Activated CD8-positive, alpha-beta T cell treated with anti-CD3 and anti-CD28 coated beads for 36 hours (primary cell): ENCODE measurements at regions of chr17 and their contacts with region 1.

Region 1: GRCh38 chr17:63993368-63993985 is 4.7 kb upstream of the PRR29 start:
- DNase-seq: no peak
- ATAC-seq: no peak
- H3K4me3 Mint-ChIP-seq: no peak overlapping the region
- H3K27ac Mint-ChIP-seq: peak overlapping the region; percentile 37
- H3K4me1 Mint-ChIP-seq: peaks cover 38% of the 10 kb centered on the region
- H3K27me3 Mint-ChIP-seq: no peaks in the 10 kb centered on the region
- CTCF ChIP-seq: no peak

Region 2: GRCh38 chr17:63842540-63843386 is 150.7 kb before region 1 on chr17 and contains the start of gene SMARCD2:
- CTCF ChIA-PET with region 1: no interaction called
- POLR2A ChIA-PET with region 1: no interaction called
- intact Hi-C with region 1: no loop called
- DNase-seq: peak; percentile 99
- ATAC-seq: peak; percentile 92
- H3K4me3 Mint-ChIP-seq: peak within 1 kb of the TSS; percentile 98
- H3K27ac Mint-ChIP-seq: peak within 1 kb of the TSS; percentile 95
- H3K4me1 Mint-ChIP-seq: peaks cover 23% of the 10 kb centered on the region
- H3K27me3 Mint-ChIP-seq: no peaks in the 10 kb centered on the region
- CTCF ChIP-seq: no peak
- total RNA-seq, gene SMARCD2: 99.4 to 103 TPM

Region 3: DNA sequence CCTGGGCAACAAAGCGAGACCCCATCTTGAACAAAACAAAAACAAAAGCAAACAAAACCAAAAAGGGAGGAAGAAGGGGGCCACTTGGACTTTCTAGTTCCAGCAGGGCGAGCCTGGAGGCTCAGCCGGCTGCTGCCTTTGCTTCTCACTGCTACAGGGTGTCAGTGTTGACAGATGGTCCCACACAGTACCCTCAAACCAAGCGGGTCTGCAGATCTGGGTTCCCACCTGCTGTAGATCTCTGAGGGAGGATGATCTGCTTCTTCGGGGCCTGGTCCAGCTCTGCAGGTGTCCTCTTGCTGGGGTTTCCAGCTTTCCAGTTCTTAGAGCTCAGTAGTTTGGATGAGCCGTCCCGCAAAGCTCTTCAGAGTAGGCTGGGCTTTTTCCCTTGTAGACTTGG is 89.2 kb before region 1 on chr17:
- CTCF ChIA-PET with region 1: interaction called, 14 read pairs
- POLR2A ChIA-PET with region 1: no interaction called
- intact Hi-C with region 1: no loop called
- DNase-seq: no peak
- ATAC-seq: no peak
- H3K4me3 Mint-ChIP-seq: no peak overlapping the region
- H3K27ac Mint-ChIP-seq: no peak overlapping the region
- H3K4me1 Mint-ChIP-seq: peaks cover 8% of the 10 kb centered on the region
- H3K27me3 Mint-ChIP-seq: peaks cover 3% of the 10 kb centered on the region
- CTCF ChIP-seq: no peak

Region 4: GRCh38 chr17:63976702-63977101 is 16.8 kb before region 1 on chr17:
- CTCF ChIA-PET with region 1: interaction called, 14 read pairs
- POLR2A ChIA-PET with region 1: interaction called, 3 read pairs
- intact Hi-C with region 1: no loop called
- DNase-seq: no peak
- ATAC-seq: no peak
- H3K4me3 Mint-ChIP-seq: no peak overlapping the region
- H3K27ac Mint-ChIP-seq: no peak overlapping the region
- H3K4me1 Mint-ChIP-seq: peaks cover 16% of the 10 kb centered on the region
- H3K27me3 Mint-ChIP-seq: no peaks in the 10 kb centered on the region
- CTCF ChIP-seq: no peak

Region 5: DNA sequence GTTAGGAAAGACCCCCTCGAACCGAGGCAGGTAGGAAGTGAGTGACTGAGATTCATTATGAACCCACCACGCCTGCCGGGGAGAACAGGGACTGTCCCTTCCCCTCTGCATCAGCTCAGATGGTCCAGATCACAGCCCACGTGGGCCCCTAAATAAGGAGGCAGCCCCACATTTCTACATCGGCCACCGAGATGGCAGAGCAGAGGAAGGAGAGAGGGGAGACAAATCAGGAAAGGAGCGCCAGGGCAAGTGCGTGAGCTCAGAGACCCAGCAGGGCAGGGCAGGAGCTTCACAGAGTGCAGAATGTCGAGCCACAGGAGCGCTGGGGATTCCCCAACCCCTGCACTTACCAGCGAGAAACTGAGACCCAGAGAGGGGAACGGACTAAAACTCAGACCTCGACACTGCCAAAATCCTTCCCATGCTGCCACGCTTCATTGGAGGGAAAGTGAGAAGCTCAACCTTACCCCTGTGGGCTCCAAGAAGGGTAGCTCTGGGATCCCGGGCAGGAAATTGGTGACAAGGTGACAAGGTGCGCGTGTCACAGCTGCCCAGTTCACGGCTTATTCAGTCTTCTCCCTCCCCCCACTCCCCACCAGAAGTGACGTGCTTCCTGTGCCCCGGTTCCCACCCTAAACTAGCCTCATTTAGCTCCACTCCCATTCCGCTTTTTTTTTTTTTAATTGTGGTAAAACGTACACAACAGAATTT is 26.7 kb after region 1 on chr17 and contains the start of gene ICAM2:
- CTCF ChIA-PET with region 1: interaction called, 15 read pairs
- POLR2A ChIA-PET with region 1: interaction called, 6 read pairs
- intact Hi-C with region 1: no loop called
- DNase-seq: peak; percentile 96
- ATAC-seq: peak; percentile 72
- H3K4me3 Mint-ChIP-seq: peak within 1 kb of the TSS; percentile 94
- H3K27ac Mint-ChIP-seq: peak within 1 kb of the TSS; percentile 98
- H3K4me1 Mint-ChIP-seq: peaks cover 66% of the 10 kb centered on the region
- H3K27me3 Mint-ChIP-seq: no peaks in the 10 kb centered on the region
- CTCF ChIP-seq: no peak
- total RNA-seq, gene ICAM2: 53.3 to 53.7 TPM